ENCODE measurements at regions of chr1 and their contacts with region 1.

Region 1: GRCh38 chr1:41739061-41739955 is 179.4 kb downstream of the HIVEP3 start:
- DNase-seq: peak; percentile 92
- H3K4me3 Mint-ChIP-seq: peak overlapping the region; percentile 61
- H3K27ac Mint-ChIP-seq: peak overlapping the region; percentile 94
- H3K4me1 Mint-ChIP-seq: peaks cover 87% of the 10 kb centered on the region
- H3K27me3 Mint-ChIP-seq: no peaks in the 10 kb centered on the region

Region 2: GRCh38 chr1:41416552-41417334 is 322.6 kb before region 1 on chr1:
- intact Hi-C with region 1: no loop called
- DNase-seq: peak; percentile 87
- H3K4me3 Mint-ChIP-seq: no peak overlapping the region
- H3K27ac Mint-ChIP-seq: no peak overlapping the region
- H3K4me1 Mint-ChIP-seq: peaks cover 2% of the 10 kb centered on the region
- H3K27me3 Mint-ChIP-seq: no peaks in the 10 kb centered on the region

Region 3: GRCh38 chr1:41662061-41662764 is 77.1 kb before region 1 on chr1:
- intact Hi-C with region 1: loop called (anchors 1 kb)
- DNase-seq: peak; percentile 93
- H3K4me3 Mint-ChIP-seq: peak overlapping the region; percentile 71
- H3K27ac Mint-ChIP-seq: peak overlapping the region; percentile 74
- H3K4me1 Mint-ChIP-seq: peaks cover 66% of the 10 kb centered on the region
- H3K27me3 Mint-ChIP-seq: no peaks in the 10 kb centered on the region

Region 4: GRCh38 chr1:41704196-41704595 is 35.1 kb before region 1 on chr1:
- intact Hi-C with region 1: no loop called
- DNase-seq: no peak
- H3K4me3 Mint-ChIP-seq: no peak overlapping the region
- H3K27ac Mint-ChIP-seq: no peak overlapping the region
- H3K4me1 Mint-ChIP-seq: peaks cover 20% of the 10 kb centered on the region
- H3K27me3 Mint-ChIP-seq: peaks cover 3% of the 10 kb centered on the region

Region 5: DNA sequence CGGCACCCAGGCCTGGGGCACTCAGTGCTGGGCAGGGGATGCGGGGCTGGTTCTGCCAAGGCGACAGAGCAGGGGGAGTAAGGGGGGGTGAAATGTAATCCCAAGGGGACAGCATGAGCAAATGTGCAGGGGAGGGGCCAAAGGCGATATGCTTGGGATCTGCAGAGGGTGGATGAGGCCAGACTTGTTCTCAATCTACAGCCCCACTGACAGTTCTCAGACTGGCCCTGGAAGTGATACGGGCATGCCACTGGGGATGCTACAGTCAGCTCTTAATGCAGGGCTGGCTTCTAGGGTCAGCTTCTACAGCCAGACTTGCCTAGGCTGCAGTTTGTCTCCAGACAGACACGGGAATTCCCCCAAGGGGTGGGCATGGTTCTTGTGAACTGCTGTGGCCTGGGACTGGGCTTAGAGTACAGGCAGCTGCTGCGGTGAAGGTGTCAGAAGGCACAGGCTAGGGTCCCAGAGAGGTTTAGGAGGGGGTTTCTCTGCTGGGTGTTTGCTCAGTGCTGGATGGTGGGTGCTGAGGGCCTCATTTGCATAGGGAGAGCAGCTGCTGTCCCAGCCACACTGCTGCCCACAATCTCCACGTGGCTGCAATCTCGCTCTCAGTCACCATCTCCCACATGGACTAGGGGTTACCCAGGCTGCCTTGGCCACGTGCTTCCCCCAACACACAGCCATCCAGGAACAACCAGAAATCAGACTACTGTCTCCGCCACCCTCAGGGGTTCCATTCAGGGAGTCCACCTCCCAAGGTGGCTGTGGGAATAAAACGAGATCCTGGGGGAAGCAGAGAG is 10.7 kb before region 1 on chr1:
- intact Hi-C with region 1: loop called (anchors 1 kb)
- DNase-seq: peak; percentile 76
- H3K4me3 Mint-ChIP-seq: peak overlapping the region; percentile 50
- H3K27ac Mint-ChIP-seq: peak overlapping the region; percentile 90
- H3K4me1 Mint-ChIP-seq: peaks cover 47% of the 10 kb centered on the region
- H3K27me3 Mint-ChIP-seq: no peaks in the 10 kb centered on the region

Region 6: GRCh38 chr1:41783189-41783639 is 43.9 kb after region 1 on chr1:
- intact Hi-C with region 1: loop called (anchors 1 kb)
- DNase-seq: no peak
- H3K4me3 Mint-ChIP-seq: peak overlapping the region; percentile 27
- H3K27ac Mint-ChIP-seq: peak overlapping the region; percentile 79
- H3K4me1 Mint-ChIP-seq: peaks cover 27% of the 10 kb centered on the region
- H3K27me3 Mint-ChIP-seq: no peaks in the 10 kb centered on the region

Region 7: GRCh38 chr1:41806472-41807155 is 67.3 kb after region 1 on chr1:
- intact Hi-C with region 1: loop called (anchors 1 kb)
- DNase-seq: peak; percentile 86
- H3K4me3 Mint-ChIP-seq: peak overlapping the region; percentile 76
- H3K27ac Mint-ChIP-seq: peak overlapping the region; percentile 91
- H3K4me1 Mint-ChIP-seq: peaks cover 86% of the 10 kb centered on the region
- H3K27me3 Mint-ChIP-seq: no peaks in the 10 kb centered on the region

Region 8: DNA sequence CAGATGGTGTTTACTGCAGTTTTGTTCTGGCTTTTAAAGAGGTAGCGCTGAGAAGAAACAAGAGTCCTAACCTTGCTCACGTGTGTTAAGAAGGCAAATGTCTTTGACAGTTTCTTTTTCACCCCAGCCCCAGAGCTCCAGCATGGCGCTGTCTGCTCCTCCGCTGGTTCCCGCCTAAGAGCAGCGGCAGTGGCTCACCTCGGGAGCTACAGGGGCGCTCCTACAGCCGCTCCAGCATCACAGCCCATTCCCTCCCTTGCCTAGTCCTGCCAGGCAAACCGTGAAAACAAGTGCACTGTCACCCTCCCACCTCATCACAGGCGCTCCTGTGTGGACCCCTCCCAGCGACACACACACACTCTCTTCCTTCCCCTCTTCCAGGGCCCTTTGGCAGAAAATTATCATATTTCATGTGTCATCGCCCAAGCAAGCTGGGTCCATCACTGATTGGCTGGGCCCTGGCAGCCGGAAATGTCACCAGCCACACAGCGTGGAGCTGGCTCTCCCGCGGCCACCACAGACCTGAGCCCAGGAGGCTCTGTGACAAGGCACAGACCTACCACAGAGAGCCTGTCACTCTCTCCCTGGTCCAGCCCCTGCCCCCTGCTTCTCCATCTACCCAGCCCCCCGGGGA is 180.6 kb after region 1 on chr1:
- intact Hi-C with region 1: loop called (anchors 5 kb)
- DNase-seq: peak; percentile 95
- H3K4me3 Mint-ChIP-seq: peak overlapping the region; percentile 95
- H3K27ac Mint-ChIP-seq: peak overlapping the region; percentile 96
- H3K4me1 Mint-ChIP-seq: peaks cover 51% of the 10 kb centered on the region
- H3K27me3 Mint-ChIP-seq: peaks cover 5% of the 10 kb centered on the region